OCI-LY7 (cell line): ENCODE measurements at regions of chr3 and their contacts with region 1.

Region 1: DNA sequence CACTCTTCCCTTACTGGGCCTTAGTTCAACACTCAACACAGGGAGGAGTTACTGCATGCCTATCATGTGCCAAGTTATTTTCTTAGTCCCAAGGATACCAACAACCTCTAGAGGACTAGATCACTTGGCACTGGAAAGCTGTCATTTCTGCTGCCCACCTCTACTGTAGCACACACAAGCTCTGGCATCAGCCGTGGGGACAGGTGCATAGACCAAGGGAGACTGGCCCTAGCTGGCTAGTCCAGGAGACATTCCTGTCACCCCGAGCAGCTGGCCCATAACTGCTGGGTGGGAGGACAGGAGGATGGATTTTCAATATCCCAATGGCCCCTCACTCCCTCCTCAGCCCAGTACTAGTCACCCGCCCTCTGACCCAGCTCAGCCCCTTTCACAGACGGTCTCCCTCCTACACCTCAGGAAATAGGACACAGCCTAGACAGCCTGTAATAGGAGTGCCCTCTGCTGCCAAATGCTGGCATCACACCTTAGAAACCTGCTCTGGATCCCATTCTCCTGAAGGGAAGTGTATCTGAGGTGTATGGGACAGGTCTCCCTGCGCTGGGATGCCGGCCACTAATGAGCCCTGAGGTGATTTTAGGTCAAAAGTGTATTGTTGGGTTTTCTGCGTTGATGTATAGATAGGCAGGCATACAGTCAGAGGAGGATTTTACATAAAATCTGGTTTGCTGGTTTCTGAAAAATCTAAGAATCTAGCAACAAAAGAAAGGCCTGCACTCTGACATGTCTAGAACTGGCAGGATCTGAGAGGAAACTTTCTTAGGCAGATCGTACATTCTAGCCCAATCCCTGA is 3.4 kb upstream of the DZIP1L start:
- DNase-seq: peak; percentile 49
- H3K4me3 ChIP-seq: no peak overlapping the region
- H3K27ac ChIP-seq: no peak overlapping the region
- H3K4me1 ChIP-seq: no peaks in the 10 kb centered on the region
- CTCF ChIP-seq: peak; percentile 84

Region 2: DNA sequence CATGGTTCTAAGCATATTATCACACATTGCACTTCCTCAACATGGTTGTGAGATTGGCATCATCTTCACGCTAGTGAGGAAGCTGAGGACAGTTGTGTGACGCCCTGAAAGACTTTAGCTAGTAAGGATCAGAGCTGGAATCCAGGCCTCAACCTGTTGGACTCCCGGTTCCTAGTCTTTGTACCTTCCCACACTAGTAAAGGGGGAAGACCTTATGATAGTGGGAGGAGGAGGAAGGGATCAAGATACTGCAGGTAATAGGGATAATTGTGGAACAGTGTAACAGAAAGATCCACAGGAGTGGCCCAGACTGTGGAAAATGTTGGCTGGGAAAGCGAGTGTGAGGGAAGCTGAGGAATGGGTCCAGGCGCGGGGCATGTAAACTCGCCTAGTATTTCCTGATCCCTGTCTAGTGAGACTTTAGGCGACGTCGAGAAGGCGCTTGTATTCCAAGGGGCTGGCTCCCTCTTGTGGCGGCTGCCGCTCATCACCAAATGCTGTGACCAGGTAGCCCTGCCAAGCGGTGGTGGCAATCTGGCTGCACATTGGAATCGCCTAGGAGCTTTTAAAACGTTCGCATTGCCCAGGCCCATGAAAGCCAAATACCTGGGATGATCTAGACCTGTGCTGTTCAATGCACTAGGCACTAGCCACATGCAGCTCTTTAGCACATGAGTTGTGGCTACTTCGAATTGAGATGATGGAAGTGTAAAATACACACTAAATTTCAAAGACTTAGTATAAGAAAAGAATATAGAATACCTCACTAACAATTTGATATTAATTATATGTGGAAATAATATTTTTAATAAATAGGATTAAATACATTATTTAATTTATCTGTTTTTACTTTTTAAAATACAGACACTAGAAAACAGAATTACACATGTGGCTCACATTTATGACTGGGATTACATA is 147.6 kb before region 1 on chr3:
- CTCF ChIA-PET with region 1: no interaction called
- POLR2A ChIA-PET with region 1: no interaction called
- intact Hi-C with region 1: no loop called
- DNase-seq: peak; percentile 46
- H3K4me3 ChIP-seq: no peak overlapping the region
- H3K27ac ChIP-seq: no peak overlapping the region
- H3K4me1 ChIP-seq: no peaks in the 10 kb centered on the region
- CTCF ChIP-seq: peak; percentile 80

Region 3: DNA sequence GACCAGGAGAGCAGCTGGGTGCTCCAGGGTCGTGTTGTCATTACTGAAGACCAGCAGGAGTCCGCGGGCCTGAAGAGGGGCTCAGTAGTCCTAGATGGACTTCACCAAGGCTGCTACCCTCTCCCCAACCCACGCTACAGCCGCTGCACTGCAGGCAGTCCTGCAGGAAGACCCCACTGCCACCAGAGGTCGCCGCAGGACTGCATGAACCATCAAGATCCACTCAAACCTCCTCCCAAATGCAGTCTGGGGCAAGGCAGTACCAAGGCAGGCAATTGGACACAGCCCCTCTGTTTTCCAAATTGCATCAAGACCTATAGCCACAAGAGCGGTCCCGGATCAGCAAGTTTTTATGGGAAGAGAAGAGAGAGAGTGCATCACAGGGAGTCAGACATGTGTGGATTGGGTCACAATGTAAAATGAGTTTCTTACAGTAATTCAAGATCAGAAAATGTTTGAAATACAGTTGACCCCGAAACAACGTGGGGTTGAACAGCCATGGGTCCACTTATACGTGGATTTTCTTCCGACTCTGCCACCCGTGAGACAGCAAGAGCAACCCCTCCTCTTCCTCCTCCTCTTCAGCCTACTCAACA is 50.1 kb before region 1 on chr3:
- CTCF ChIA-PET with region 1: interaction called, 3 read pairs
- POLR2A ChIA-PET with region 1: no interaction called
- intact Hi-C with region 1: loop called (anchors 1 kb)
- DNase-seq: peak; percentile 73
- H3K4me3 ChIP-seq: no peak overlapping the region
- H3K27ac ChIP-seq: no peak overlapping the region
- H3K4me1 ChIP-seq: no peaks in the 10 kb centered on the region
- CTCF ChIP-seq: peak; percentile 95